Gastrocnemius medialis (tissue), 4 donors: ENCODE measurements at regions of chr9 and their contacts with region 1.

Region 1: DNA sequence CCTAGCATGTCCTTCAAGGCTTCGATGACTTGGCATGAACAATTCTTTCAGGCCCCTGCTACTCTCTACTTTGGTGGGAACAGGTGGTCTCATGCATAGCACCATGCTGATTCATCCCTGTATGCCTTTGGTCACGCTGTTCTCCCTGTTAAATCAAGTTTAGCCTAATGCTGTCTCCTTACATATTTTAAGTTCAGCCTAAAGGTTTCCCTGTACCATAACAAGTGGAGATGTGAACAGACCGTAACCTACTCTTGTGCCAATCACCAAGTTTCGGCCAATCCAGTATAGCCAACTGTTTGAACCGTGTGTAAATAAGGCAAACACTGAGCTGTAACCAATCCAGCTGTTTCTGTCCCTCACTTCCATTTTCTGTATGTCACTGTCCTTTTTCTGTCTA is 8.0 kb downstream of the GAS1 start:
- DNase-seq: no peak
- ATAC-seq: no peak
- H3K4me3 ChIP-seq: no peak overlapping the region
- H3K27ac ChIP-seq: no peak overlapping the region
- H3K4me1 ChIP-seq: no peaks in the 10 kb centered on the region
- H3K27me3 ChIP-seq: peaks cover 0 to 26% (median 7%) of the 10 kb centered on the region in 3 donors
- CTCF ChIP-seq: no peak
- POLR2A ChIP-seq: no peak

Region 2: DNA sequence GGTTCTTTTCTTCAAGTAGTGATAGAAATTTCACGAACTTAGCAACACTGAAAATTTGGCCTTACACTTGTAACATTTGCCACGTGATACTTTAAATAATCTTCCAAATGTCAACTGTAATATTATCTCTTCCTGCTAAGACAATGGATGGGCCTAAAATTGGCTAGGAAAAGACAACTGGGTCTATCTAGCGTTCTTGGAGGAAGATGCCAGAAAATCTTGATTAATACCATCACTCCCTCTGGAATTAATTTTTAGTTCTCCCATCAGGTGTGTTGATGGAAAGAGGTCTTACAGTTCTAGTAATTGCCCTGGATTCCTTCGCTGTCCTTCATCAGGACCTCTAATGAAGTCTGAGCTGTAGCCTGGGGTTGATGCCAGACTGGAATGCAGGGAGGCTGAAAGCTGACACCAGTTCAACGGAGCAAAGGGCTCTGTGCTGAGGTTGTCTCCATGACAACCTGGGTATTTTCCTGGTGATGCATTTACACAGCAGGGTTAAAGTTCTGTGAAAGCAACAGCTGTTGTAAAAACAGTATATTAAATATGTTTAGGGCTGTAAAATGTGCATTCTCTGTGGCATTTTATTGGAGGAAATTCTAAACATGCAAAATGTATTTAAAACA is 84.3 kb before region 1 on chr9:
- in situ Hi-C with region 1: no loop called
- intact Hi-C with region 1: no loop called
- DNase-seq: no peak
- ATAC-seq: no peak
- H3K4me3 ChIP-seq: no peak overlapping the region
- H3K27ac ChIP-seq: no peak overlapping the region
- H3K4me1 ChIP-seq: no peaks in the 10 kb centered on the region
- H3K27me3 ChIP-seq: no peaks in the 10 kb centered on the region
- CTCF ChIP-seq: no peak
- POLR2A ChIP-seq: no peak

Region 3: DNA sequence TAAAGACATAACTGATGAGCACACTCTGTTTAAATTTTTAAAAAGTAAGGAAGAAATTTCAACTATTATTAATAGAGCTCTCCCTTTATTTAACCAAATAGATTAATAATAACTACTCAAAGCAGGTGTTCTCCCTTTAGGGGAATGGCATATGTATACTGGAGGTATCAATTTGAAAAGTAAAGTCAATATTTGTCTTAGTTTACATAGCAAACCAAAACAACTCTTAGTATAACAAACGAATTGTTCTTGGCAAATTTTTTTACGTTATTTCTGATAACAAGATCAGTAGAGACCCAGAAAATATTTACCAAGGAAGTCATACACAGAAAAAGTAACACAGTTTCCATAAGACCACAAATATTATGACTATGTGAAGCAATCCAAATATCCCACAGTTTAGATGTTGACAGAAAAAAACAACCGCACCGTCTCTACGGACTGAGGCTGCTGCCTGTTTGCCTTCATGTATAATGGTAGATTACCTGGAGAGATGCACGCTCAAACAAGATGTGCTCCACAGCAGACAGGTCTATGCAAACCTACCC is 511.8 kb after region 1 on chr9:
- in situ Hi-C with region 1: no loop called
- intact Hi-C with region 1: loop called (anchors 10 kb)
- DNase-seq: no peak
- ATAC-seq: no peak
- H3K4me3 ChIP-seq: no peak overlapping the region
- H3K27ac ChIP-seq: no peak overlapping the region
- H3K4me1 ChIP-seq: no peaks in the 10 kb centered on the region
- H3K27me3 ChIP-seq: no peaks in the 10 kb centered on the region
- CTCF ChIP-seq: no peak
- POLR2A ChIP-seq: no peak